ENCODE measurements at regions of chr3 and their contacts with region 1.

Region 1: GRCh38 chr3:98522244-98523090 is at the start of gene CLDND1:
- DNase-seq: peak; percentile 95 to 99
- H3K4me3 ChIP-seq: peak within 1 kb of the TSS; percentile 75 to 93
- H3K27ac ChIP-seq: peak within 1 kb of the TSS; percentile 92 to 95
- H3K4me1 ChIP-seq: peaks cover 0 to 2% of the 10 kb centered on the region in 2 donors
- H3K27me3 ChIP-seq: no peaks in the 10 kb centered on the region
- CTCF ChIP-seq: no peak
- total RNA-seq, gene CLDND1: 171 TPM

Region 2: DNA sequence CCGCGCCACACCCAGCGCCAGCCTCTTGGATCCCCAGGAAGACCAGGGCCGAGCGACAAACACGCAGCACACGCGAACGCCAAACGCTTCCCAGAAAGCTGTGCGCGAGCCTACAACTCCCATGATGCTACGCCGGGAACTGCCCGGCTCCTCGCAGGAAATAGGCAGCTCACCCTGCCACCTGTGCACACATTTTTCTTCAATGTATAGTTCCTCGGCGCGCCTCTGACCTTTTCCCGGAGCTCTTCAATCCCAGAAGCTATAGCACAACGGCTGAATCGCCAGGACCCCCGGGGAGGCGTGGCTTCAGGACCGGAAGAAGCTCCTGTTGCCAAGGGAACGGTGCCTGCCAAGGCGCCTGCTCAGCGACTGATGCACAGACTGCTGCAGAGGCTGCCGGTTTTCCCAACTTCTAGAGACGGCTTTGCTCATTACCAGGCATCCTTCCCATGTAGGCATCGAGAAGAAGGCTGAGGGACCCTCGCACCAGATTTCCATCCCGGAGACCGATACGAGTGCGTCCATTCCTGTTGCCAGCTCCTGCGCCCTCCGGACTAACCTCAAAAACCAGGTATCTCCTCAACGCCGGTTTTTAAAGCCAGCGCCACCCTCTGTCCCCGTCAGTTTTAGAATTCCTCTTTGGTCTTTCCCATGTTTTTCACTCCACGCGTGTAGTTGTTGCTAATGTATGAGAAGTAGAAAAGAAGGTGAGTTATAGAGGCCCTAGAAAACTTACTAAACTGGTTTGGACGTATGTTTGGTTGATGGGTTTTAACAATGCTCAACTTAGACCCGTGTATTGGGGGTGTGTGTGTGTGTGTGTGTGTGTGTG is 757.8 kb before region 1 on chr3 and contains the start of gene ARL6:
- intact Hi-C with region 1: loop called (anchors 10 kb)
- DNase-seq: peak; percentile 22 to 88
- H3K4me3 ChIP-seq: peak within 1 kb of the TSS; percentile 72 to 86
- H3K27ac ChIP-seq: peak within 1 kb of the TSS; percentile 51 to 70
- H3K4me1 ChIP-seq: peaks cover 0 to 5% of the 10 kb centered on the region in 2 donors
- H3K27me3 ChIP-seq: no peaks in the 10 kb centered on the region
- CTCF ChIP-seq: no peak
- total RNA-seq, gene ARL6: 18.5 TPM

Region 3: DNA sequence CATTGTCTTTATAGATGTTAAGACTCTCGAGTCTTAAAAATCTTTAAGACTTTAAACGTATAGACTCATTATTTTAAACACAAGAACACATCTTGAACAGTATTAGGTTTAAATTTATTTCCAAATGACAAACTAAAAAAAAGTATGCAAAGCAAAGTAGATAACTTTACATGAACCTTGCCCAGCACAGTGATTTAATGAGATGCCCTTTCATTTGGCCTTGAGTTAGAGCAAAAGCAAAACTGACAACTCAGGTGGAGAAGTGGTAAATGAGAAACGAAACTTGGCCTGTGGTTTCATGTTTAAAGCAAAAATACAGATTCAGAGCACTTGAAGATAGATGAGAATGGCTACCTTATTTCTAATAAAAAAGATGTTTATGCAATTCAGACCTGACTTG is 17.9 kb after region 1 on chr3:
- intact Hi-C with region 1: no loop called
- DNase-seq: no peak
- H3K4me3 ChIP-seq: no peak overlapping the region
- H3K27ac ChIP-seq: no peak overlapping the region
- H3K4me1 ChIP-seq: no peaks in the 10 kb centered on the region
- H3K27me3 ChIP-seq: no peaks in the 10 kb centered on the region
- CTCF ChIP-seq: no peak

Region 4: GRCh38 chr3:98593046-98593936 is 70.8 kb after region 1 on chr3 and contains the start of gene CPOX:
- intact Hi-C with region 1: loop called (anchors 1 kb)
- DNase-seq: peak; percentile 31 to 92
- H3K4me3 ChIP-seq: peak within 1 kb of the TSS; percentile 77 to 94
- H3K27ac ChIP-seq: peak within 1 kb of the TSS; percentile 83 to 91
- H3K4me1 ChIP-seq: peaks cover 0 to 12% of the 10 kb centered on the region in 2 donors
- H3K27me3 ChIP-seq: no peaks in the 10 kb centered on the region
- CTCF ChIP-seq: no peak
- total RNA-seq, gene CPOX: 34.8 TPM

Measured in ascending aorta (tissue), 2 donors.